WTC11 (cell line): ENCODE measurements at regions of chr20 and their contacts with region 1.

Region 1: GRCh38 chr20:5529331-5530148 is 212.8 kb upstream of the PROKR2 start:
- DNase-seq: peak; percentile 89
- ATAC-seq: peak; percentile 88
- H3K4me3 Mint-ChIP-seq: peak overlapping the region; percentile 39; the same call in 1 of the 2 replicates
- H3K27ac Mint-ChIP-seq: no peak overlapping the region
- H3K4me1 Mint-ChIP-seq: 0 out of 2 replicates have a peak, but pooled peaks cover 3% of the 10 kb centered on the region
- H3K27me3 Mint-ChIP-seq: no peaks in the 10 kb centered on the region; the same call in 1 of the 2 replicates
- CTCF ChIP-seq: peak; percentile 51

Region 2: DNA sequence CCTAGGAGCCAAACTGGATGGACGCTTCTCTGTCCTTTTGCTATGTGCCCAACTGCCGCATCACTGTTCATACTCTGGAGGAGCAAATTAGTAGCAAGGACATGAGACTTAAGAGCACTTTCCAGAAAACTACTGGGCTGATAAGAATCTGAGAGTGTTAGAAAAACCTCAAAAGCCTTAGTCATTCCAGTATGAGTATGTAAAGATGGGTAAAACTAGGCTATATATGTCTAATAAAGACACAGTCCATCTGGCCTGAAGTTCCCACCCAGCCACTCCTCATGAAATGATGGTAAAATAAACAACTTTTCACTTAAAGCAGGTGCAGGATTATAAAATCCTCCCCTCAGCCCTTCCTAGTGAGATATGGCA is 251.3 kb after region 1 on chr20:
- CTCF ChIA-PET with region 1: interaction called, 13 read pairs
- POLR2A ChIA-PET with region 1: no interaction called
- DNase-seq: no peak
- ATAC-seq: no peak
- H3K4me3 Mint-ChIP-seq: no peak overlapping the region
- H3K27ac Mint-ChIP-seq: 0 out of 2 replicates have a peak overlapping the region, but pooled peaks have one; percentile 42
- H3K4me1 Mint-ChIP-seq: peaks cover 4% of the 10 kb centered on the region; the same call in 1 of the 2 replicates
- H3K27me3 Mint-ChIP-seq: no peaks in the 10 kb centered on the region
- CTCF ChIP-seq: no peak

Region 3: GRCh38 chr20:5793916-5794315 is 264.4 kb after region 1 on chr20:
- CTCF ChIA-PET with region 1: interaction called, 62 read pairs
- POLR2A ChIA-PET with region 1: no interaction called
- DNase-seq: no peak
- ATAC-seq: no peak
- H3K4me3 Mint-ChIP-seq: no peak overlapping the region
- H3K27ac Mint-ChIP-seq: peak overlapping the region; percentile 88
- H3K4me1 Mint-ChIP-seq: peaks cover 31% of the 10 kb centered on the region
- H3K27me3 Mint-ChIP-seq: no peaks in the 10 kb centered on the region
- CTCF ChIP-seq: no peak

Region 4: DNA sequence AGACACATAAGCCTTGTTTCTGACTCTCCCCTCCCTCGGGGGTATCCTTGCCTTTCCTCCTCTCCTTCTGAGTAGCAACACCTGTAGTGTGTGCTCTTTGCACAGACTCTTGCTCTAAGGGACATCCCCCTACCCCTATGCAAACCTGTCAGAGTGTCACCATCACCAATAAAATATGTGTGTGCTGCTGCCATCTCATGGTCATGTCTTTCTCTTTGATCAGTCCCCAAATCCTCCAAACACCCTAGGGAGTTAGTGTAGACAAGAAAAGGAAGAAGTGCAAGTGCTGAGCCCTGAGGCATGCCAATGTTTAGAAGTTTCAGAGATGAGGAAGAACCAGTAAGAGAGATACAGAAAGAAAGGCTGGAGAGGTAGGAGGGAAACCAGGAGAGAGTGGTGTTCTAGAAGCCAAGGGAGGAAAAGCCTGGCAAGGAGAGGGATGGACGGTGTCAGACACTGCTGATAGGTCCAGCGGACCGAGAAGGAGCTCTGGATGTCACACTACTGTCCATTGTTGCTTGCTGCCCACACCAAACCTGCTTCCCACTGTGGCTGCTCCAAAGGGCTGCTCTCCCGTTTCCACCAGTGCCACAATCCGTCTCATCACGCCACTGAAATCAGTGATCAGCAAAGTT is 404.4 kb after region 1 on chr20:
- CTCF ChIA-PET with region 1: interaction called, 37 read pairs
- POLR2A ChIA-PET with region 1: no interaction called
- DNase-seq: no peak
- ATAC-seq: peak; percentile 82
- H3K4me3 Mint-ChIP-seq: no peak overlapping the region
- H3K27ac Mint-ChIP-seq: no peak overlapping the region
- H3K4me1 Mint-ChIP-seq: no peaks in the 10 kb centered on the region
- H3K27me3 Mint-ChIP-seq: peaks cover 6% of the 10 kb centered on the region
- CTCF ChIP-seq: no peak

Region 5: DNA sequence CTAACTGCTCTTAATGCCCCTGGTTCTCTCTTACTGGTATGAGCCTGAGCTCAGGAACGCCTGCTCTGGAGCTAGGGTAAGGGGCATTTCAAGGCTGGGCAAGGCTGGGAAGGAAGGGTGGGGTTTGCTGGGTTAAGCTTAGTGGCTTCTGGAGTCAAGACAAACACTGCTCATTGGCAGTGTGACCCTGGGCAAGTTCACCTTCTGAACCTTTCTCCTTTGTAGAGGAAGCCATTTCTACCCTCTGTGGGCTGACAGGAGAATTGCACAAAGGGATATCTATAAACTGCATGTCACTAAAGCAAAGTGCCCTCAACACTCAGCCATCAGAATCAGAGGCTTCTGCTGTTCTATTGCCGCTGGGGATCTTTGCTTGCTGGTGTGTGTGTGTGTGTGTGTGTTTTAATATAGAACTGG is 544.6 kb after region 1 on chr20:
- CTCF ChIA-PET with region 1: interaction called, 12 read pairs
- POLR2A ChIA-PET with region 1: no interaction called
- DNase-seq: no peak
- ATAC-seq: peak; percentile 92
- H3K4me3 Mint-ChIP-seq: no peak overlapping the region
- H3K27ac Mint-ChIP-seq: 0 out of 2 replicates have a peak overlapping the region, but pooled peaks have one; percentile 11
- H3K4me1 Mint-ChIP-seq: no peaks in the 10 kb centered on the region
- H3K27me3 Mint-ChIP-seq: no peaks in the 10 kb centered on the region
- CTCF ChIP-seq: peak; percentile 38